Lower lobe of right lung (tissue), 2 donors: ENCODE measurements at regions of chr22 and their contacts with region 1.

Region 1: DNA sequence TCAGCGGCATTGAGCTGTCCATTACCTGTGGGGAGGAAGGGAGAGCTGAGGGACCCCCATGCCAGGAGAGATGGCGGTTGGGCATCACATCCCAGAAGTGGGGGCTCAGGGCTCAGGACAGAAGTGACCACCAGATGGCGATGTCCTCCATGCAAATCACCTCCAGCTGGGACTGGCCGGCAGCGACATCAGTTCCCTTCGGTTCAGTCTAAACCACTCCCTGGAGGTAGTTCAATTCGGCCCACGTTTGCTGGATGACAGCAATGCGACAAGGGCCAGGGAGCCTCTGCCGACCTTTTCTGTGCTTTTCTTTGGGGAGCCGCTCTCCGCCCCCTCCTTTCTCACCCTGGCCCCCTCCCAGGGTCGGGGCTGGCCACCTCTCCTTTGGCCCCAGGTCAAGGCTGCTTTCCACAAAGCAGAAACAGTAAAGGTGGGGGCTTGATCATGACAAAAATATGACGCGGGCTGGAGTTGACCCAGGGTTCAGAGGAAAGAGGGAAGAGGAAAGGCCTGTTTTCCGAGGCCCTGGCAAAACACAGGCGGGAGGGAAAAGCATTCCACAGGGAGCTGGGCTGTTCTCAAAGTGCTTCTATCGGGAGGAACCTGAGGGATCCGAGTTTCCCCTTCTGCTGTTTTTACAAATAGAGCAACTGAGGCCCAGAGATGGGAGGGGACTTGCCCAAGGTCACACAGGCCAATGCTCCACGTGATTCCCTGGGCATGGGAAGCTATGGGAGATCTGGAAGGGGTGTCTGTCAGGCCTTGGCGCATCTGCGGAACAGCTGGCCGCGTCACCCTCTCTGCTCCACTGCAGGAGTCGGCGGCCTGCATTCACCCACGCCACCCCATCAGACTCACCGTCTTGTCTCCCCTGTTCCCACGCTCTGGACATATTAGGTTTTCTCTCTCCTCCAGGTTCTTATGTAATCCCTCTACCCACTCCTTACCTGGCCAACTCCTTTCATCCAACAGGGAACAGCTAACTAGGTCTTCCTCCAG is 54.7 kb downstream of the FBXO7 start:
- DNase-seq: peak; percentile 84
- ATAC-seq: peak; percentile 84 to 86
- H3K4me3 ChIP-seq: no peak overlapping the region
- H3K27ac ChIP-seq: peak overlapping the region; percentile 75
- H3K4me1 ChIP-seq: peaks cover 49% of the 10 kb centered on the region
- H3K27me3 ChIP-seq: no peaks in the 10 kb centered on the region
- CTCF ChIP-seq: peak; percentile 88

Region 2: GRCh38 chr22:32474635-32475467 is 54.4 kb before region 1 on chr22 and contains the start of gene FBXO7:
- intact Hi-C with region 1: no loop called
- DNase-seq: peak; percentile 95
- ATAC-seq: peak; percentile 94 to 97
- H3K4me3 ChIP-seq: peak within 1 kb of the TSS; percentile 88
- H3K27ac ChIP-seq: peak within 1 kb of the TSS; percentile 100
- H3K4me1 ChIP-seq: peaks cover 42% of the 10 kb centered on the region
- H3K27me3 ChIP-seq: no peaks in the 10 kb centered on the region
- CTCF ChIP-seq: no peak
- total RNA-seq, gene FBXO7: 93.2 TPM

Region 3: GRCh38 chr22:32796865-32797573 is 267.7 kb after region 1 on chr22:
- intact Hi-C with region 1: loop called (anchors 10 kb)
- DNase-seq: peak; percentile 71
- ATAC-seq: peak; percentile 75 to 82
- H3K4me3 ChIP-seq: no peak overlapping the region
- H3K27ac ChIP-seq: no peak overlapping the region
- H3K4me1 ChIP-seq: peaks cover 23% of the 10 kb centered on the region
- H3K27me3 ChIP-seq: peaks cover 10% of the 10 kb centered on the region
- CTCF ChIP-seq: peak; percentile 88

Region 4: GRCh38 chr22:32985899-32986765 is 456.8 kb after region 1 on chr22:
- intact Hi-C with region 1: loop called (anchors 10 kb)
- DNase-seq: peak; percentile 51
- ATAC-seq: peak; percentile 96 to 97
- H3K4me3 ChIP-seq: no peak overlapping the region
- H3K27ac ChIP-seq: peak overlapping the region; percentile 49
- H3K4me1 ChIP-seq: peaks cover 27% of the 10 kb centered on the region
- H3K27me3 ChIP-seq: no peaks in the 10 kb centered on the region
- CTCF ChIP-seq: peak; percentile 90